Activated CD4-positive, alpha-beta T cell treated with anti-CD3 and anti-CD28 coated beads for 36 hours (primary cell): ENCODE measurements at regions of chr17 and their contacts with region 1.

Region 1: GRCh38 chr17:78040440-78041385 is 82.2 kb downstream of the TNRC6C start:
- DNase-seq: peak; percentile 53
- ATAC-seq: peak; percentile 86
- H3K4me3 Mint-ChIP-seq: peak overlapping the region; percentile 70
- H3K27ac Mint-ChIP-seq: peak overlapping the region; percentile 64
- H3K4me1 Mint-ChIP-seq: peaks cover 21% of the 10 kb centered on the region
- H3K27me3 Mint-ChIP-seq: no peaks in the 10 kb centered on the region

Region 2: GRCh38 chr17:77968788-77969187 is 71.9 kb before region 1 on chr17:
- CTCF ChIA-PET with region 1: no interaction called
- POLR2A ChIA-PET with region 1: no interaction called
- intact Hi-C with region 1: no loop called
- DNase-seq: no peak
- ATAC-seq: no peak
- H3K4me3 Mint-ChIP-seq: no peak overlapping the region
- H3K27ac Mint-ChIP-seq: no peak overlapping the region
- H3K4me1 Mint-ChIP-seq: peaks cover 80% of the 10 kb centered on the region
- H3K27me3 Mint-ChIP-seq: no peaks in the 10 kb centered on the region

Region 3: GRCh38 chr17:78226749-78227399 is 186.2 kb after region 1 on chr17:
- CTCF ChIA-PET with region 1: interaction called, 3 read pairs
- POLR2A ChIA-PET with region 1: interaction called, 10 read pairs
- intact Hi-C with region 1: no loop called
- DNase-seq: peak; percentile 32
- ATAC-seq: peak; percentile 48
- H3K4me3 Mint-ChIP-seq: no peak overlapping the region
- H3K27ac Mint-ChIP-seq: no peak overlapping the region
- H3K4me1 Mint-ChIP-seq: peaks cover 7% of the 10 kb centered on the region
- H3K27me3 Mint-ChIP-seq: peaks cover 12% of the 10 kb centered on the region